CD4-positive, alpha-beta T cell (primary cell): ENCODE measurements at regions of chrX and their contacts with region 1.

Region 1: GRCh38 chrX:39427906-39428305 is 626.6 kb downstream of the MID1IP1 start:
- DNase-seq: peak in 2 of 14 experiments; percentile 10 to 36
- ATAC-seq: peak; percentile 44
- H3K4me3 ChIP-seq: no peak overlapping the region
- H3K4me3 Mint-ChIP-seq: no peak overlapping the region
- H3K27ac ChIP-seq: no peak overlapping the region
- H3K27ac Mint-ChIP-seq: peak overlapping the region; percentile 64
- H3K4me1 ChIP-seq: peaks cover 10% of the 10 kb centered on the region
- H3K4me1 Mint-ChIP-seq: peaks cover 36% of the 10 kb centered on the region
- H3K27me3 ChIP-seq: no peaks in the 10 kb centered on the region
- H3K27me3 Mint-ChIP-seq: no peaks in the 10 kb centered on the region
- CTCF ChIP-seq: no peak

Region 2: GRCh38 chrX:39267176-39267575 is 160.7 kb before region 1 on chrX:
- CTCF ChIA-PET with region 1: no interaction called
- POLR2A ChIA-PET with region 1: no interaction called
- intact Hi-C with region 1: loop called in 1 of 2 experiments (anchors 5 kb)
- DNase-seq: no peak
- ATAC-seq: no peak
- H3K4me3 ChIP-seq: no peak overlapping the region
- H3K4me3 Mint-ChIP-seq: no peak overlapping the region
- H3K27ac ChIP-seq: no peak overlapping the region
- H3K27ac Mint-ChIP-seq: no peak overlapping the region
- H3K4me1 ChIP-seq: no peaks in the 10 kb centered on the region
- H3K4me1 Mint-ChIP-seq: peaks cover 9% of the 10 kb centered on the region
- H3K27me3 ChIP-seq: no peaks in the 10 kb centered on the region
- H3K27me3 Mint-ChIP-seq: no peaks in the 10 kb centered on the region
- CTCF ChIP-seq: no peak

Region 3: GRCh38 chrX:39487166-39487968 is 59.5 kb after region 1 on chrX:
- CTCF ChIA-PET with region 1: no interaction called
- POLR2A ChIA-PET with region 1: no interaction called
- intact Hi-C with region 1: no loop called
- DNase-seq: no peak
- ATAC-seq: no peak
- H3K4me3 ChIP-seq: no peak overlapping the region
- H3K4me3 Mint-ChIP-seq: no peak overlapping the region
- H3K27ac ChIP-seq: no peak overlapping the region
- H3K27ac Mint-ChIP-seq: no peak overlapping the region
- H3K4me1 ChIP-seq: peaks cover 20% of the 10 kb centered on the region
- H3K4me1 Mint-ChIP-seq: peaks cover 16% of the 10 kb centered on the region
- H3K27me3 ChIP-seq: no peaks in the 10 kb centered on the region
- H3K27me3 Mint-ChIP-seq: no peaks in the 10 kb centered on the region
- CTCF ChIP-seq: no peak

Region 4: GRCh38 chrX:39836802-39837420 is 409.0 kb after region 1 on chrX:
- CTCF ChIA-PET with region 1: no interaction called
- POLR2A ChIA-PET with region 1: no interaction called
- intact Hi-C with region 1: no loop called
- DNase-seq: no peak
- ATAC-seq: no peak
- H3K4me3 ChIP-seq: no peak overlapping the region
- H3K4me3 Mint-ChIP-seq: no peak overlapping the region
- H3K27ac ChIP-seq: no peak overlapping the region
- H3K27ac Mint-ChIP-seq: no peak overlapping the region
- H3K4me1 ChIP-seq: no peaks in the 10 kb centered on the region
- H3K4me1 Mint-ChIP-seq: no peaks in the 10 kb centered on the region
- H3K27me3 ChIP-seq: no peaks in the 10 kb centered on the region
- H3K27me3 Mint-ChIP-seq: no peaks in the 10 kb centered on the region
- CTCF ChIP-seq: no peak